CD8-positive, alpha-beta T cell (primary cell): ENCODE measurements at regions of chr12 and their contacts with region 1.

Region 1: GRCh38 chr12:79503281-79503680 is 187.5 kb downstream of the PAWR start:
- DNase-seq: no peak
- ATAC-seq: no peak
- H3K4me3 ChIP-seq: no peak overlapping the region
- H3K4me3 Mint-ChIP-seq: no peak overlapping the region
- H3K27ac ChIP-seq: no peak overlapping the region
- H3K27ac Mint-ChIP-seq: no peak overlapping the region
- H3K4me1 ChIP-seq: no peaks in the 10 kb centered on the region
- H3K4me1 Mint-ChIP-seq: no peaks in the 10 kb centered on the region
- H3K27me3 ChIP-seq: no peaks in the 10 kb centered on the region
- H3K27me3 Mint-ChIP-seq: no peaks in the 10 kb centered on the region
- CTCF ChIP-seq: no peak

Region 2: DNA sequence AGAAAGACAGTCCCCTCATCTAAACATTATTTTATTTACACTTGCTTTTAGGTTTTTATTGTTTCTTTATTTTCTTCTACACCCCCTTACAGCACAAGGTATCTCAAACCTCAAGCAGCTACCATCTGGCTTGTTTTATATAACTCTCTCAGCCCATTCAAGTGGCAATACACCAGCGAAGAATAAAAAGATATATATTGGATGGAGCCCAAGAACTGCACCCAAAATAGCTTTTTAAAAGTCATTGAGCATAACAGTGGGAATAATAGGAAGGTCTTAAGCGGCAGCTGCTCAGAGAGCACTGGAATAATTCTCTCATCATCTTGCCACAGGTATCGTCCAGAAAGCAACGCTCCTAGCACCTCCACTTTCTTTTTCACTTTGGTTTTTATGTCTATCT is 316.2 kb before region 1 on chr12:
- CTCF ChIA-PET with region 1: no interaction called
- POLR2A ChIA-PET with region 1: no interaction called
- intact Hi-C with region 1: loop called in 1 of 2 experiments (anchors 5 kb)
- DNase-seq: no peak
- ATAC-seq: no peak
- H3K4me3 ChIP-seq: no peak overlapping the region
- H3K4me3 Mint-ChIP-seq: no peak overlapping the region
- H3K27ac ChIP-seq: no peak overlapping the region
- H3K27ac Mint-ChIP-seq: no peak overlapping the region
- H3K4me1 ChIP-seq: no peaks in the 10 kb centered on the region
- H3K4me1 Mint-ChIP-seq: no peaks in the 10 kb centered on the region
- H3K27me3 ChIP-seq: no peaks in the 10 kb centered on the region
- H3K27me3 Mint-ChIP-seq: no peaks in the 10 kb centered on the region
- CTCF ChIP-seq: no peak